ENCODE measurements at regions of chr10 and their contacts with region 1.

Region 1: DNA sequence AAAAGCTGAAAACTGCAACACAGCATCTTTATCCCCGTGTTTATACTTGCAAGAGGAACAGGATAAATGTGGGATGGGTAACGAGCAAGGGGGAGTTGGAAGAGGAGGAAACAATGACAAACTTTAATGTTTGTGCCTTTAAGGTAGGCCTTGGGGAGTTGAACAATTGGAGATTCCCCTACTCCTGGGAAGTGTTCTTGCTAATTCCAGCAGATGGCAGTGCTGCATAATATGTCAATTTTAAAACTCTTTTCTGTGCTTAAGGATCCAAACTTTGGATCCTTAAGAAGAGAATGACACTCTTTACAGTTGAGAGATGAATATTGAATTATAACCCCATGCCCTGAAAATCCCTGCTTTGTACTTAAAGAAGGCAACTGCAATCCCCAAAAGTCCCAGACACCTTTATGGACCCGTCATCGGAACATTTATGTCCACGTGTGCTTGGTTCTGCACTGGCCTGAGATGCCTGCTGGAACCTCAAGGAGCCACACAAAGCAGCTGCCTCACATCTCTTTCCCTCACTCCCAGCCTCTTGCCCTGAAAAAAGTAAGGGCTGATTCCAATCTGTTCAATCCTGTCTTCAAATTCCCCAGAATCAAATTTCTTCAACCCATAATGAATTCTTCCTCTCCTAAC is 12.0 kb downstream of the IFIT5 start:
- DNase-seq: no peak
- ATAC-seq: peak; percentile 76
- H3K4me3 Mint-ChIP-seq: no peak overlapping the region
- H3K27ac Mint-ChIP-seq: no peak overlapping the region
- H3K4me1 Mint-ChIP-seq: peaks cover under 1% of the 10 kb centered on the region
- H3K27me3 Mint-ChIP-seq: no peaks in the 10 kb centered on the region

Region 2: DNA sequence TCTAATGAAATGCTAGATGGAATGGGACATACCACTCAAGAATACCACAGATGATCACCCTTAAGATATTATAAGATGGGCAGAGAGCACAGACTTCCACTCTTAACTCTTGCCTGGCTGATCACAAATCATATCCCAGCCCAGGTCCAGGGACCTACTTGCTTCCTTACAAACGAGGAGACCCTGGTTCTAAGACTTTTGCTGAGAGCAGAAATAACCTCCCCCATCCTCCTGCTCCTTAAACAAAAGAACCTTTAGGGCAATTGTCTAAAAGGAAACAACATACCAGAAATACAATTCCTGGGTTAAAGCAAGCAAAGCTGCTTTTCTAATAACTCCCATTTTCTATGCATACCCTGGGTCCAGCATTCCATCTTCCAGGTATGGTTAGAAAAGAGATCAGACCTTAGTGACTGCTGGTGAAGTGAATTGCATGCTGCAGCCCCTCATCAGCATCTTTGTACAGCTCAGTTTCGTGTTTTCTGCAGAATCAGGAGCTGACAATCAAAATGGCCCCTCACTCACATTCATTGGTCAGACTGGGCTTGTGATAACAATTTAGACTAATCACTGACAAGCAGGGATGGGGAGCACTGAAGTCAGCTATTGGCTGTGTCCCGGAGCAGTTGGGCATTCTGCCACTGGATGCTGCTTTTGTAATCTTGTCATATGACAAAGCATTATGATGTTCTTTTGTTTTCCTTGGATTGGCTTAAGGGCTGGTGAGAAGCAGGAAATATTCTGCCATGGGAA is 84.0 kb before region 1 on chr10:
- CTCF ChIA-PET with region 1: no interaction called
- POLR2A ChIA-PET with region 1: no interaction called
- intact Hi-C with region 1: no loop called
- DNase-seq: no peak
- ATAC-seq: no peak
- H3K4me3 Mint-ChIP-seq: no peak overlapping the region
- H3K27ac Mint-ChIP-seq: no peak overlapping the region
- H3K4me1 Mint-ChIP-seq: peaks cover 6% of the 10 kb centered on the region
- H3K27me3 Mint-ChIP-seq: peaks cover 12% of the 10 kb centered on the region

Region 3: GRCh38 chr10:89563861-89564478 is 137.6 kb after region 1 on chr10:
- CTCF ChIA-PET with region 1: interaction called, 4 read pairs
- POLR2A ChIA-PET with region 1: no interaction called
- intact Hi-C with region 1: loop called (anchors 1 kb)
- DNase-seq: no peak
- ATAC-seq: peak; percentile 73
- H3K4me3 Mint-ChIP-seq: no peak overlapping the region
- H3K27ac Mint-ChIP-seq: no peak overlapping the region
- H3K4me1 Mint-ChIP-seq: no peaks in the 10 kb centered on the region
- H3K27me3 Mint-ChIP-seq: peaks cover 6% of the 10 kb centered on the region

Measured in activated CD4-positive, alpha-beta T cell treated with anti-CD3 and anti-CD28 coated beads for 36 hours (primary cell).